Activated CD4-positive, alpha-beta memory T cell treated with anti-CD3 and anti-CD28 coated beads for 36 hours (primary cell): ENCODE measurements at regions of chr7 and their contacts with region 1.

Region 1: GRCh38 chr7:149147072-149147751 is at the start of gene ZNF398:
- DNase-seq: peak; percentile 86
- H3K4me3 Mint-ChIP-seq: peak within 1 kb of the TSS; percentile 79
- H3K27ac Mint-ChIP-seq: peak within 1 kb of the TSS; percentile 87
- H3K4me1 Mint-ChIP-seq: peaks cover 31% of the 10 kb centered on the region
- H3K27me3 Mint-ChIP-seq: no peaks in the 10 kb centered on the region
- total RNA-seq, gene ZNF398: 8.4 to 9.4 TPM

Region 2: DNA sequence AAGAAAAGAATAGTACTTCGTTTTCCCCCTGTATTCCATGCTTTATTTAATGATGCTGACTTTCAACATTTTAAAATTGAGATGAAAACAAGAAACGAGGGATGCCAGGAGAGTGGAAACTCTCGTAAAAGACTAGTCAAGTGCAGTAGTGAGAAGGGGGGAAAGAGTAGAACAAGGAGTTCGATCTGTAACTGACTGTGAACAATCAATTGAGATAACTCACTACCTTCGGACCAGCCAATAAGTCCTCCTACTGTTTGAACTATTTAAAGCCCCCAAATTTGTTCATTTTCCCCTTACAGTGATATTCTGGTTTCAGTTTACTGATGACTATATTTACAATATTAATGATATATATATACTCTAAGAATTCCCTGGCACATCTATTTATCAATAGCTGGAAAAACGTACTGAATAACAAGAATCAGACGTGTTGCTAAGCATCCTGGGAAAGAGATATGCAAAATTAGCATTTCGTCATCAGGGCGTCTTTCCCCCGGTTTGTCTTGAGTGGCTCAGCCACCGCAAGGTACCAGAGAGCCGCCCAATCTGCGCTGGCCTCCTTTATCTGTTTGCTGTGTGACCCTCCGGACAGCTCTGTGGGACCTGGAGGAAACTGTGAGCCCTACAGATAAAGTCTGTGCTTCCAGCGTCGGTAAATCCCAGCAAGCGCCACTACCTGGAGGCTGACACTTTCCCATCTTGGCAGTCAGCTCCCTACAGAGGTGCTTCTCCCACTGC is 160.0 kb before region 1 on chr7:
- CTCF ChIA-PET with region 1: interaction called, 5 read pairs
- POLR2A ChIA-PET with region 1: no interaction called
- intact Hi-C with region 1: loop called (anchors 5 kb)
- DNase-seq: peak; percentile 87
- H3K4me3 Mint-ChIP-seq: peak overlapping the region; percentile 95
- H3K27ac Mint-ChIP-seq: peak overlapping the region; percentile 92
- H3K4me1 Mint-ChIP-seq: peaks cover 40% of the 10 kb centered on the region
- H3K27me3 Mint-ChIP-seq: peaks cover 2% of the 10 kb centered on the region

Region 3: DNA sequence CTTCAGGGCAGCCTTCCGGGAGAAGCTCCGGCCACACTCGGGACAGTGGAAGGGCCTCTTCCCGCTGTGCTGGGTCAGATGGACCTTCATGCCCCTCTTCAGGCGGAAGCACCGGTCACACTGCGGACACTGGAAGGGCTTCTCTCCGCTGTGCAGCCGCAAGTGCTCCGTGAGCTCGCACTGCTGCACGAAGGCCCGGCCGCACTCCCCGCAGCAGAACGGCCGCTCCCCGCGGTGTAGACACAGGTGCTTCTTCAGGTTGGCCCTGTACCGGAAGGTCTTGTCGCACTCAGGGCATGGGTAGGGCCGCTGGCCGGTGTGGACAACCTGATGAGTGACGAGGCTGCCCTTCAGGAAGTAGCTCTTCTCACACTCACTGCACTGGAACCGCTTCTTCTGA is 42.5 kb before region 1 on chr7:
- CTCF ChIA-PET with region 1: no interaction called
- POLR2A ChIA-PET with region 1: no interaction called
- intact Hi-C with region 1: no loop called
- DNase-seq: no peak
- H3K4me3 Mint-ChIP-seq: no peak overlapping the region
- H3K27ac Mint-ChIP-seq: no peak overlapping the region
- H3K4me1 Mint-ChIP-seq: peaks cover 4% of the 10 kb centered on the region
- H3K27me3 Mint-ChIP-seq: no peaks in the 10 kb centered on the region

Region 4: GRCh38 chr7:149125863-149126661 is 21.1 kb before region 1 on chr7 and contains the start of gene ZNF425:
- CTCF ChIA-PET with region 1: interaction called, 49 read pairs
- POLR2A ChIA-PET with region 1: interaction called, 32 read pairs
- intact Hi-C with region 1: loop called (anchors 1 kb)
- DNase-seq: peak; percentile 95
- H3K4me3 Mint-ChIP-seq: peak within 1 kb of the TSS; percentile 98
- H3K27ac Mint-ChIP-seq: peak within 1 kb of the TSS; percentile 98
- H3K4me1 Mint-ChIP-seq: peaks cover 18% of the 10 kb centered on the region
- H3K27me3 Mint-ChIP-seq: no peaks in the 10 kb centered on the region
- total RNA-seq, gene ZNF425: 0.74 to 0.75 TPM

Region 5: DNA sequence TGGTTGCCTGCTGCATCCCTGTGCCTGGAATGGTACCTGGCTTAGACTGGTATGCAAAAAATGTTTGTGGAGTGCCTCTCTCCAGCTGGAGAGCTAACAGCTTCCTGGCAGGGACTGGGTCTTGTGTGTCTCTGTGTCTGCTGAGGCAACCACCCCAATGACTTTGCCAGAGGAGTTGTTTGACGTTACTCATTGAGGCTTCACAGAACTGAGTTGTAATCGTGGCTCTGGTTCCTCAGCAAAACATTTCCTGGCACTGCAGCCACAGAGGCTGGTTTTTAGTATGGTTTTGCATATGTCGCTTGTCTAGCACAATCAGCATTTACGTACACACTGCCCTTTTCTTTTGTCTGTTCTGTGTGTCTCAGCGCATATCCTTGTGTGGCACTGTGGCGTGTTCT is 55.6 kb after region 1 on chr7:
- CTCF ChIA-PET with region 1: interaction called, 4 read pairs
- POLR2A ChIA-PET with region 1: no interaction called
- intact Hi-C with region 1: loop called (anchors 2 kb)
- DNase-seq: peak; percentile 83
- H3K4me3 Mint-ChIP-seq: peak overlapping the region; percentile 40
- H3K27ac Mint-ChIP-seq: peak overlapping the region; percentile 98
- H3K4me1 Mint-ChIP-seq: peaks cover 63% of the 10 kb centered on the region
- H3K27me3 Mint-ChIP-seq: no peaks in the 10 kb centered on the region

Region 6: GRCh38 chr7:149261829-149262617 is 114.8 kb after region 1 on chr7 and contains the start of gene ZNF783:
- CTCF ChIA-PET with region 1: interaction called, 10 read pairs
- POLR2A ChIA-PET with region 1: interaction called, 11 read pairs
- intact Hi-C with region 1: loop called (anchors 1 kb)
- DNase-seq: peak; percentile 88
- H3K4me3 Mint-ChIP-seq: peak within 1 kb of the TSS; percentile 78
- H3K27ac Mint-ChIP-seq: peak within 1 kb of the TSS; percentile 94
- H3K4me1 Mint-ChIP-seq: peaks cover 49% of the 10 kb centered on the region
- H3K27me3 Mint-ChIP-seq: no peaks in the 10 kb centered on the region
- total RNA-seq, gene ZNF783: 15.5 to 17.1 TPM

Region 7: DNA sequence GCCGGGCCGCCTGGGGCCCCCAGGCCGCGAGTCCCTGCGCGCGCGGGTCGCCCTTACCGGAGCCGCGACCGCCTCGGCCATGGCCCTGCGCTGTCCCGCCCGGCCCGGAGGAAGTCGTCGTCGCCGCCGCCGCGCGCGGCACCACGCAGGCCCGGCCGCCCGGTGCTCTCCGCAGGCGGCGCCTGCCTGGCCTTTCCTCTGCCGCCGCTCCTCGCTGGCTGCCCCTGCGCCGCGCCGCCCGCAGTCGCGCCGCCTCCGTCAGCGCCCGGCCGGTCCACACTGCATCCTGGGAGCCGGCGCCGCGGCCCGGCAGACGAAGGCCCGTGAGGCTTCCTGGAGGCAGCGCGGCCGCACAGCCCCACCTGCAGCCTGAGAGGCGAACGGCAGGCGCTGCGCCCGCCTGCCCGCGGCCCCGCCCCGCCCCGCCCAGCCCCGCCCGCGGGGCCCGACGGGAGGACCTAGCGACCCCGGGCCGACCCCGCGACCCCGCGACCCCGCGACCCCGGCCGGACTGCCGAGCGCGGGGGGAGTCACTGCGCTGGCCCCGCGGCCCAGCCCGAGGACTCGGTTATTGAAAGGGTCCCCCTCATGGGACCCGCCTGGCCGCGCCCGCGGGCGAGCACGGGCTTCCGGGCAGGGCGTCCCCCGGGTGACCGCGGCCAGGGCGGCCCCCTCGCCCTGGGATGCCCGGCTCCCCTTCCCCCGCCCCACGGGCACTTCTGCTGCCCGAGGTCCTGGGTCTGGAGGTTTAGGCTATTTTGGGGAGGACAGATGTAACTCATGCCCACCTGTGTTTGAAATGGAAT is 350.4 kb after region 1 on chr7 and contains the start of gene ZNF746:
- CTCF ChIA-PET with region 1: interaction called, 4 read pairs
- POLR2A ChIA-PET with region 1: no interaction called
- intact Hi-C with region 1: loop called (anchors 10 kb)
- DNase-seq: peak; percentile 89
- H3K4me3 Mint-ChIP-seq: peak within 1 kb of the TSS; percentile 98
- H3K27ac Mint-ChIP-seq: peak within 1 kb of the TSS; percentile 94
- H3K4me1 Mint-ChIP-seq: peaks cover 30% of the 10 kb centered on the region
- H3K27me3 Mint-ChIP-seq: peaks cover 2% of the 10 kb centered on the region
- total RNA-seq, gene ZNF746: 13.5 to 14.9 TPM